Colonic mucosa (tissue), 4 donors: ENCODE measurements at regions of chr22 and their contacts with region 1.

Region 1: GRCh38 chr22:45863981-45864751 is 112.8 kb downstream of the WNT7B start:
- DNase-seq: peak; percentile 81
- H3K4me3 ChIP-seq: no peak overlapping the region
- H3K27ac ChIP-seq: no peak overlapping the region
- H3K4me1 ChIP-seq: no peaks in the 10 kb centered on the region
- H3K27me3 ChIP-seq: peaks cover 35% of the 10 kb centered on the region
- CTCF ChIP-seq: peak; percentile 96

Region 2: GRCh38 chr22:45577746-45578523 is 286.2 kb before region 1 on chr22:
- intact Hi-C with region 1: loop called (anchors 10 kb)
- DNase-seq: peak; percentile 86
- H3K4me3 ChIP-seq: no peak overlapping the region
- H3K27ac ChIP-seq: no peak overlapping the region
- H3K4me1 ChIP-seq: no peaks in the 10 kb centered on the region
- H3K27me3 ChIP-seq: no peaks in the 10 kb centered on the region
- CTCF ChIP-seq: peak; percentile 95

Region 3: DNA sequence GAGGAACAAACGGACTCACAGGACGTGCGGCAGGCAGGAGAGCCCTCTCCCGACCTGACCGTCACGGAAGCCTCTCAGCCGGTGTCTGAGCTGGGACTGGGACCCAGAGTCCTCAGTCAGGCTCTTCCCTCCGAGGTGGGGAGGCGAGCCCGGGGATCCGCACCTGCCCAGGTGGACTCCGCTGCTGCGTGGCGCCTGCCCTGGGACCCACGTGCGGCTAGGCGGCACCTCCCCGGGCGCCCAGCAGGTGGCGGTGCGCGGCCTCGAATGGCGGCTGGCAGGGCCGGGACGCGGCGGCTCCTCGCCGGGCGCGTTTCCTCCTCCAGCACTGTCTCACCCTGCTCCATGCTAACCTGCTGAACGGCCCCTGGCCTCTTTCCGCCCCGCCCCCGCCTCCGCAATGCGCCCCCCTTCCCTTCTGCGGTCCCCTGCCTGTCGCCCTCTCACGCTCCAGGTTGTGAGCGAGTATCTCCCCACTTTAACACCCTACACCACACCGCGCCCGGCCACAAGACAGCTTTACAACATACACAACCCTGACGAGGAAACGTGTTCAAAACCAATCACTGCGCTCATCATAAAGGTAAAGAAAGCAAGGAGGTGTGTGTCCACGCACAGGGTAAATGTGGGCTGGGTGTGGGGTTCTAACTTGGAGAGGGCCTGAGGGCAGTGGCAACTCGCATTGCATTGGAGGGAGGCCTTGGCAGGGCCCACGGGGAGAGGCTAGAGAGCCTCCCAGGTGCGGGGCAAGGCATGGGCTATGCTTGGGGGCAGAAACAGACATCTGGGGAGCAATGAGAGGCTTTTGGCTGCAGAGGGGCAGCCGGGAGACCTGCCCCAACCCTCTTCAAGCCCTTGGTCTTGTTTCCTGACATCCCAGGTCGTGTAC is 218.4 kb before region 1 on chr22:
- intact Hi-C with region 1: loop called (anchors 5 kb)
- DNase-seq: peak; percentile 81
- H3K4me3 ChIP-seq: peak overlapping the region; percentile 6
- H3K27ac ChIP-seq: no peak overlapping the region
- H3K4me1 ChIP-seq: peaks cover 4% of the 10 kb centered on the region
- H3K27me3 ChIP-seq: no peaks in the 10 kb centered on the region
- CTCF ChIP-seq: peak; percentile 95

Region 4: GRCh38 chr22:46335201-46336118 is 471.3 kb after region 1 on chr22 and contains the start of gene TRMU:
- intact Hi-C with region 1: no loop called
- DNase-seq: peak; percentile 82
- H3K4me3 ChIP-seq: peak within 1 kb of the TSS; percentile 80
- H3K27ac ChIP-seq: peak within 1 kb of the TSS; percentile 76
- H3K4me1 ChIP-seq: peaks cover 6% of the 10 kb centered on the region
- H3K27me3 ChIP-seq: no peaks in the 10 kb centered on the region
- CTCF ChIP-seq: no peak
- total RNA-seq, gene TRMU: 25.2 to 71.8 TPM